ENCODE measurements at regions of chr15 and their contacts with region 1.

Region 1: DNA sequence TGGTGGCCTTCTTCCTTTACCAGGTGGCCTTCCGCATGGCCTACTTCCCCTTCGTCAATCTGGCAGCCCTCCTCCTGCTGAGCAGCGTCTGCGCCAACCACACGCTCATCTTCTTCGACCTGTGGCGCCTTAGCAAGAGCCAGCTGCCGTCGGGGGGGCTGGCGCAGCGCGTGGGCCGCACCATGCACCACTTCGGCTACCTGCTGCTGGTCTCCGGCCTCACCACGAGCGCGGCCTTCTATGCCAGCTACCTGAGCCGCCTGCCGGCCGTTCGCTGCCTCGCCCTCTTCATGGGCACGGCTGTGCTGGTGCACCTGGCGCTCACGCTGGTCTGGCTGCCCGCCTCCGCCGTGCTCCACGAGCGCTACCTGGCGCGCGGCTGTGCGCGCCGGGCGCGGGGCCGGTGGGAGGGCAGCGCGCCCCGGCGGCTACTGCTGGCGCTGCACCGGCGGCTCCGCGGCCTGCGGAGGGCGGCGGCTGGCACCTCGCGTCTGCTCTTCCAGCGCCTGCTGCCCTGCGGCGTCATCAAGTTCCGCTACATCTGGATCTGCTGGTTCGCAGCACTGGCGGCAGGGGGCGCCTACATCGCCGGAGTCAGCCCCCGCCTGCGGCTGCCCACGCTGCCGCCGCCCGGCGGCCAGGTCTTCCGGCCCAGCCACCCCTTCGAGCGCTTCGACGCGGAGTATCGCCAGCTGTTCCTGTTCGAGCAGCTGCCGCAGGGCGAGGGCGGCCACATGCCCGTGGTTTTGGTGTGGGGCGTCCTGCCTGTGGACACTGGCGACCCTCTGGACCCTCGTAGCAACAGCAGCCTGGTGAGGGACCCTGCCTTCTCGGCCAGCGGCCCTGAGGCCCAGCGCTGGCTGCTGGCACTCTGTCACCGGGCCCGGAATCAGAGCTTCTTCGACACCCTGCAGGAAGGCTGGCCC is 9.9 kb downstream of the DISP2 start:
- DNase-seq: peak; percentile 87 to 94 (median 89)
- ATAC-seq: peak; percentile 79 to 87 (median 83)
- H3K4me3 ChIP-seq: peak overlapping the region in 1 of 3 donors; percentile 39
- H3K27ac ChIP-seq: peak overlapping the region in 2 of 3 donors; percentile 78 to 79
- H3K4me1 ChIP-seq: peaks cover 0 to 16% (median 8%) of the 10 kb centered on the region in 4 donors
- H3K27me3 ChIP-seq: no peaks in the 10 kb centered on the region
- CTCF ChIP-seq: peak; percentile 83 to 99 (median 94)
- POLR2A ChIP-seq: no peak

Region 2: GRCh38 chr15:40412095-40412759 is 44.3 kb after region 1 on chr15:
- intact Hi-C with region 1: loop called in 1 of 2 experiments (anchors 10 kb)
- DNase-seq: peak; percentile 71 to 91 (median 83)
- ATAC-seq: peak; percentile 92 to 95 (median 92)
- H3K4me3 ChIP-seq: peak overlapping the region in 2 of 3 donors; percentile 17 to 20
- H3K27ac ChIP-seq: peak overlapping the region; percentile 22 to 81 (median 64)
- H3K4me1 ChIP-seq: peaks cover 0 to 26% (median 8%) of the 10 kb centered on the region in 4 donors
- H3K27me3 ChIP-seq: no peaks in the 10 kb centered on the region
- CTCF ChIP-seq: no peak
- POLR2A ChIP-seq: no peak